Heart right ventricle (tissue), 16 donors: ENCODE measurements at regions of chr19 and their contacts with region 1.

Region 1: GRCh38 chr19:8321060-8321985 is at the starts of genes NDUFA7 and RPS28:
- DNase-seq: peak; percentile 97 to 98
- ATAC-seq: peak; percentile 95 to 98 (median 96)
- H3K4me3 ChIP-seq: peak within 1 kb of the TSS; percentile 67 to 99 (median 96)
- H3K27ac ChIP-seq: peak within 1 kb of the TSS; percentile 81 to 97 (median 96)
- H3K4me1 ChIP-seq: peaks cover 17 to 58% (median 44%) of the 10 kb centered on the region in 9 donors
- H3K27me3 ChIP-seq: no peaks in the 10 kb centered on the region
- CTCF ChIP-seq: peak; percentile 15 to 60 (median 49)
- total RNA-seq, gene NDUFA7: 74.7 to 124 (median 99.7) TPM
- total RNA-seq, gene RPS28: 992 to 1,375 (median 1,101) TPM

Region 2: GRCh38 chr19:8261347-8262310 is 59.7 kb before region 1 on chr19:
- intact Hi-C with region 1: loop called in 3 of 10 experiments (anchors 5 to 10 kb)
- DNase-seq: no peak
- ATAC-seq: peak in 2 of 8 donors; percentile 13 to 16
- H3K4me3 ChIP-seq: no peak overlapping the region
- H3K27ac ChIP-seq: no peak overlapping the region
- H3K4me1 ChIP-seq: peaks cover 0 to 10% (median 0%) of the 10 kb centered on the region in 9 donors
- H3K27me3 ChIP-seq: no peaks in the 10 kb centered on the region
- CTCF ChIP-seq: no peak

Region 3: GRCh38 chr19:8269724-8270123 is 51.6 kb before region 1 on chr19:
- intact Hi-C with region 1: loop called in 3 of 10 experiments (anchors 5 to 10 kb)
- DNase-seq: no peak
- ATAC-seq: no peak
- H3K4me3 ChIP-seq: no peak overlapping the region
- H3K27ac ChIP-seq: peak overlapping the region in 1 of 10 donors; percentile 86
- H3K4me1 ChIP-seq: peaks cover 0 to 16% (median 5%) of the 10 kb centered on the region in 9 donors
- H3K27me3 ChIP-seq: no peaks in the 10 kb centered on the region
- CTCF ChIP-seq: no peak

Region 4: DNA sequence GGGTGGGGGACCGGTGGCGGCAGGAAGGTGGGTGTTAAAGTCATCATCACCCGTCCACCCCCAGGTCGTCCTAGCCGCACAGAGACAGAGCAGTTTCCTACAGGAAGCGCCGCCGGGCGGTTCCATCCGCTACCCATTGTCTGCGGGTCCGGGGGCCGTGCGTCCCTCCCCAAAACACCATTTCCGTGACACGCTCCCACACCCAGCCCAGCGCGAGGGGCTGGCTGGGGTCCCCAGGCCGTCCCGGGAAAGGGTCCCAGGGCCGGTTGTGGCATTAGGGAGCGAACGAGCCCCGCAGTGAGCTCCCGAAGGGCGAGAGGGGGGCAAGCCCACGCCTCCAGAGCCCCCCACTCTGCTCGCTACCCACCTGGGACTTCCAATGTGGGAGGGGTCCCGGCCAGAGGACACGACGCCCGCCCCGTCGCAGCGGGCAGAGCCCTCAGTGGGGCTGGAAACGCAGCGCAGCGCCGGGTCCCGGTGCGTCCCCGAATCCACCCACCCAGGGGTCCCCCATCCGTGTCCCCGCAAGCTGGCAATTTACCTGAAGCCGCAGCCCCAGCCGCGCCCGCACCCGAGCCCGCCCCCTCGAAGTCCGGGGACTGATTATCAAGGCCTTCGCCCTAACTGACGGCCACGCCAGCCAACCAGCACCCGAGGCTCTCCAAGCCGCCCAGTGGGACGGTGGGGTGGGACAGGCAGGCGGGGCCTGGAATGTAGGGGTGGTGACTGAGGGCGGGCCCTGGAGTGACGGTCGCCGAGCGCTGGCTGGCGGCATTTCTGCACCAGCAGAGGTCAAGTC is 21.6 kb after region 1 on chr19 and contains the start of gene KANK3:
- intact Hi-C with region 1: loop called in 1 of 10 experiments (anchors 2 kb)
- DNase-seq: peak; percentile 98 to 100
- ATAC-seq: peak; percentile 92 to 98 (median 94)
- H3K4me3 ChIP-seq: peak within 1 kb of the TSS; percentile 51 to 87 (median 70)
- H3K27ac ChIP-seq: peak within 1 kb of the TSS; percentile 90 to 99 (median 97)
- H3K4me1 ChIP-seq: peaks cover 0 to 53% (median 22%) of the 10 kb centered on the region in 9 donors
- H3K27me3 ChIP-seq: peaks cover 0 to 46% (median 0%) of the 10 kb centered on the region in 7 donors
- CTCF ChIP-seq: peak in 3 of 9 donors; percentile 14 to 16 (median 15)
- total RNA-seq, gene KANK3: 10.2 to 26.1 (median 16.7) TPM

Region 5: DNA sequence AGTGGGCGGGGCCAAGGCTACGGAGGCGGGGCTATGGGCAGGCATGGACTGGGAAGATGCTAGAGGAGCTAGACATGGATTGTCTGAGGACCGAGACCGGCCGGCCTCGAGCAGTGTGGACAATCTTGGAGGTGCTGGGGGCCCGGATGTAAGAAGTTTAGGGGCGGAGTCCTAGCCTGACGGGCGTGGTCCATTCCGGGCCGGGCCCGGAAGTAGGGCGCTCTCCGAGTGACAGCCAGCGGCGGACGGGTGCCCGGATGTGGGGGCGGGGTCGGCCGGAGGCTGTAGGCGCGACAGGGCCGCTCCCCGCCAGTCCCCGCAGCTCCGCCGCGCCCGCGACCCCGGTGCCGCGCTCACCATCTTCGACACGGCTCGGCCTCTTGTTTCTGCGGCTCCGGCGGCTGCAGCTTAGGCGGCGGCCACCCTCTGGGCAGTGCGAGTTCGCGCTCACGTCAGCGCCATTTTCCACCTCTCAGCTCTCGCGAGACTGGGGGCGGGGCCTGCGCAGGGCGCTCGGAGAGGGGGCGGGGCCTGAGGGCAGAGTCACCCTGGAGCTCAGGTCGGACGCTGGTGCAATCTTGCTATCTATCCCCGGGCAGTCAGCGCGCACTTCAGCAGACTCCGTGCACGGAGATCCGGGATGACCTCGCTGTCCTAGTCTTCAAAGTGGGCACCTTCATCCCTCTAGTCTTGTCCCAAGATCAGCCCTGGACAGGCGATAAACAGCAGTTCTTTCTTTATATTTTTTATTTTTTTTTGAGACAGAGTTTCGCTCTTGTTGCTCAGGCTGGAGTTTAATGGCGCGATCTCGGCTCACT is 192.6 kb after region 1 on chr19 and contains the start of gene ZNF414:
- intact Hi-C with region 1: loop called in 1 of 10 experiments (anchors 10 kb)
- DNase-seq: peak; percentile 95 to 98
- ATAC-seq: peak; percentile 93 to 97 (median 96)
- H3K4me3 ChIP-seq: peak within 1 kb of the TSS; percentile 42 to 91 (median 76)
- H3K27ac ChIP-seq: peak within 1 kb of the TSS; percentile 96 to 100 (median 99)
- H3K4me1 ChIP-seq: peaks cover 7 to 65% (median 26%) of the 10 kb centered on the region in 9 donors
- H3K27me3 ChIP-seq: no peaks in the 10 kb centered on the region
- CTCF ChIP-seq: peak in 1 of 9 donors; percentile 5
- total RNA-seq, gene ZNF414: 11.7 to 20.9 (median 17.1) TPM